Activated CD4-positive, alpha-beta T cell treated with anti-CD3 and anti-CD28 coated beads for 36 hours (primary cell): ENCODE measurements at regions of chr5 and their contacts with region 1.

Region 1: GRCh38 chr5:1536322-1536845 is 12.6 kb upstream of the LPCAT1 start:
- DNase-seq: peak; percentile 86
- ATAC-seq: peak; percentile 100
- H3K4me3 Mint-ChIP-seq: peak overlapping the region; percentile 72
- H3K27ac Mint-ChIP-seq: peak overlapping the region; percentile 90
- H3K4me1 Mint-ChIP-seq: peaks cover 22% of the 10 kb centered on the region
- H3K27me3 Mint-ChIP-seq: peaks cover 2% of the 10 kb centered on the region

Region 2: GRCh38 chr5:1111727-1112289 is 424.6 kb before region 1 on chr5 and contains the start of gene SLC12A7:
- CTCF ChIA-PET with region 1: no interaction called
- POLR2A ChIA-PET with region 1: no interaction called
- intact Hi-C with region 1: loop called in 1 of 2 experiments (anchors 5 kb)
- DNase-seq: peak; percentile 84
- ATAC-seq: peak; percentile 76
- H3K4me3 Mint-ChIP-seq: peak within 1 kb of the TSS; percentile 82
- H3K27ac Mint-ChIP-seq: peak within 1 kb of the TSS; percentile 75
- H3K4me1 Mint-ChIP-seq: peaks cover 33% of the 10 kb centered on the region
- H3K27me3 Mint-ChIP-seq: no peaks in the 10 kb centered on the region
- total RNA-seq, gene SLC12A7: 18.5 to 21.6 TPM

Region 3: DNA sequence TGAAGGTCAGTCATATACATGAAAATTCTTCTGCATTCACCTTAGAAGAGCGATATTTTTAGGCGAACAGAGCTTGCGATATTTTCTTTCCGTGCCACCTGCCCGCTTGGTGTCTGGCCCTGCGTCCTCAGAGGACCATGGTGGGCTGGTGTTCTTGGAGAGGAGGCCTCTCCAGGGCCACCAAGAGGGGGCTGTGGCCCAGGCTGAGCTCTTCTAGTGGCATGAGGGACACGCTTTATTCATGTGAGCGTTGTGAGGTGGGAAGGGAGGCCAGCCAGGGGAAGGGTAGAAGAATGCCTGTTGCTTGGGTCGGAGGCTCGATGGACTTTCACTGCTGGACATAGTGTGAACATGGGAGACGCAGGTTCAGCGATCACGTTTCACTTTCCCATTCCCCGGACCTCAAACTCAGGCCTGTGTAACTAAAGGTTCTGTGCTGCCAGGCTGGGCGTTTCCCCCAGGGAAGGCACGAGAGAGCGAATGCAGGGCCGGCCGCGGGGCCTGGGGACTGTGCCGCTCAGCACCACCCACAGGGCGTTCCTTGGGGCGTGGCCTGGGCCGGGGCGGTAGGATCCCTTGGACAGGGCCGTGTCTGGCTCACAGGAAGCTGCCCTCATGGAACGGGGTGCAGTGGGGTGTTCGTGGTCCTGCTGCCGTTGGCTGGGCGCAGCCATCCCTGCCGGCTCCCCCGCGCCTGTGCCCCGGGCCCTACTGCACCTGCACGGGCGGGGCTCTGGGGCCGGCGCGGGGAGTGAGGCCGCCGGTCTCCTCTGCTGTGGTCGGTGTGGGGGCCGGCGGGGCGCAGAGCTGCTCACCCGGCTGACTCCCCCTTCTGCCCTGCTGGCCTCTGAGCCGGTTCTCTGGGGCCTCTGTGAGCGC is 150.8 kb before region 1 on chr5:
- CTCF ChIA-PET with region 1: no interaction called
- POLR2A ChIA-PET with region 1: no interaction called
- intact Hi-C with region 1: loop called in 1 of 2 experiments (anchors 2 kb)
- DNase-seq: peak; percentile 89
- ATAC-seq: peak; percentile 95
- H3K4me3 Mint-ChIP-seq: peak overlapping the region; percentile 87
- H3K27ac Mint-ChIP-seq: peak overlapping the region; percentile 90
- H3K4me1 Mint-ChIP-seq: peaks cover 23% of the 10 kb centered on the region
- H3K27me3 Mint-ChIP-seq: peaks cover 4% of the 10 kb centered on the region

Region 4: DNA sequence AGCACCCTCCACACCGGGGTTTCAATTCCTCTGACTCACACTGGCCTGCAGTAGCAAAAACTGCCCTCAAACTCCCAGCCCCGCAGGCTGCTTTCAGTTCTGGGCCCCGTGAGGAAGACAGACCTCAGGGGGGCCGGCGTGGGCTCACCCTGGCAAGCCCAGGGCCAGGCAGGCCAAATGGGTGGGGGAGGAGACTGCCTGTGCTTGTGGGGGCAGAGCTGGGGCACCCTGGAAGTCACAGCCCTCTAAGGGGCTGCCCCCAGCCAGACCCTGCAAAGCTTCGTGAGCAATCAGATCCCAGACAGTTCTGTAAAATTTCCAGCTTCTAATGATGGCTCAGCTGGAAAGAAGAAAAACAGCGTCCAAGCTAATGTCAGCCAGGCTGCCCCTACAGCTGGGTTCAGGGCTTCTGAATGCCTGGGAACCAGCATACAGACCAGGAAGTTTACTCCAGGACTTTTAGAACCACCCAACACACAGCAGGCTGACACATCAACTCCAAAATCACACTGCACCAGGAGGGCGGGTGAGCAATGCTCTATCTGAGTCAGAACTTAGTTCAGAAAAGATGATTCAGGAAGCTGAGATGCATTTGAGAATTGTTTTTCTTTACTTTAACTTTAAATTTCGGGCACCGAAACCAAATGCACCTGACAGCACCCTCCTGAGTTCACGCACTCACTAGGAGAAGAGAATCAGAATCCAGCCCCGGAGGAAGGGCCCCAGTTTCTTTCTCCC is 47.3 kb before region 1 on chr5:
- CTCF ChIA-PET with region 1: interaction called, 3 read pairs
- POLR2A ChIA-PET with region 1: no interaction called
- intact Hi-C with region 1: loop called in 1 of 2 experiments (anchors 2 kb)
- DNase-seq: peak; percentile 80
- ATAC-seq: peak; percentile 96
- H3K4me3 Mint-ChIP-seq: no peak overlapping the region
- H3K27ac Mint-ChIP-seq: peak overlapping the region; percentile 82
- H3K4me1 Mint-ChIP-seq: peaks cover 37% of the 10 kb centered on the region
- H3K27me3 Mint-ChIP-seq: no peaks in the 10 kb centered on the region

Region 5: DNA sequence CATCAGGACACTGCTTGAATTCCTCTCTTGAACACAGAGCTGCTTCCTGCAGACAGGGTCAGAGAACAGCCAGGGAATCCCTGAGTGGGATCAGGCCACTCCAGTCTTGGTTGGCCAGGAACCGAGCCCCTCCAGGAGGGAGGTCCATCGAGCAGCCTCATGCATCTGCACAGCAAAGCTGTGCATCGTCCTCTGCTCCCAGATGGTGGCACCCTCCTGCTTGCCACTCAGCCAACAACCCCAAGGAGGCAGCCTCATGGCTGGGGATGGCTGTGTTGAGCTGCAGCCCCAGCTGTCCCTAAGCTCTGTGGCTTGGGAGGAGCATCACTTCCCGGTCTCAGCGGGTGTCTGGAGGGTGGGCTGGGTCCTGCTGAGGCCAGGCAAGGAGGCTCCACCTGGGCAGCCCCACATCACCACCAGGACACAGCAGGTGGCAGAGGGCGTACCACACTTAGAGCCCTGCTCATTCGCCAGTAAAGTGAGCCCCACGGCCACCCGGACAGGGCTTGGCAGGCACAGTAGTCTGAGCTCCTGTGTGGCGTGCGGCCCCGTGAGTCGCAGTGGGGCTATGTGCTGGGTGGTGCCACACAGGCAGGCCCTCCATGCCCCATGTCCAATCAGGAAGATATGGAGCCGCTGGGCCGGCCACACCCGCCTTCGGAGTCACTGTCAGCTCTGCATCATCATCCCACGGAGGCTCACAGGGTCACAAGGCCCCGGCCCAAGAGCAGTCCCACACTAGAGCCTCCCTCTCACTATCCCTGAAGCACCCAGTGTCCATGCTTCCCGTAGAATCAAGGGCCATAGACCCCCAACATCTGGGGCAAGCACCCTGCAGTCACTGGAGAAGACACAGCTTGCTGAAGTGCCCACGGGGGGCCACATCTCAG is 24.5 kb before region 1 on chr5:
- CTCF ChIA-PET with region 1: no interaction called
- POLR2A ChIA-PET with region 1: no interaction called
- intact Hi-C with region 1: no loop called
- DNase-seq: no peak
- ATAC-seq: no peak
- H3K4me3 Mint-ChIP-seq: no peak overlapping the region
- H3K27ac Mint-ChIP-seq: no peak overlapping the region
- H3K4me1 Mint-ChIP-seq: peaks cover 11% of the 10 kb centered on the region
- H3K27me3 Mint-ChIP-seq: no peaks in the 10 kb centered on the region

Region 6: GRCh38 chr5:1594357-1595106 is 58.1 kb after region 1 on chr5:
- CTCF ChIA-PET with region 1: no interaction called
- POLR2A ChIA-PET with region 1: no interaction called
- intact Hi-C with region 1: loop called in 1 of 2 experiments (anchors 5 kb)
- DNase-seq: peak; percentile 84
- ATAC-seq: peak; percentile 89
- H3K4me3 Mint-ChIP-seq: peak overlapping the region; percentile 67
- H3K27ac Mint-ChIP-seq: peak overlapping the region; percentile 31
- H3K4me1 Mint-ChIP-seq: peaks cover 13% of the 10 kb centered on the region
- H3K27me3 Mint-ChIP-seq: no peaks in the 10 kb centered on the region